Activated CD4-positive, alpha-beta T cell treated with anti-CD3 and anti-CD28 coated beads, Interleukin-2, amount 10 ng/mL, durations not matched to agents 7 days and 5 days (primary cell): ENCODE measurements at regions of chr20 and their contacts with region 1.

Region 1: DNA sequence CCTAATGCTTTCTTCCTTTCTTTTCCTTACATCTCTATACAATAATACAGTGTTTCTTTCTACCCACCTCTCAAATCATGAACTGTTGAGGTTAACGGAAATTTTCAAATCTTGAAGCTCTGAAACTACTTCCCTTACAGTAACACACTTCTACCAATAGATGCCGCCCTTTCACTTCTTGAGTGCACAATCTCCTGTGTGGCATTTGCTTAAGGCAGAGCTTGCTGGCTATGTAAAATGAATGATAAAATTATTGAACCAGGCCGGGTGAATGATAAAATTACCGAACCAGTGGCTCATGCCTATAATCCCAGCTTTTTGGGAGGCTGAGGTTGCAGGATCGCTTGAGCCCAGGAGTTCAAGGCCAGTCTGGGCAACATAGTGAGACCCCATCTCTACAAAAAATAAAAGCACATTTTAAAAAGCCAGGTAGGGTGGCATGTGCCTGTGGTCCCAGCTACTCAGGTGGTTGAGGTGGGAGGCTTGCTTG is 56.8 kb downstream of the KCNS1 start:
- DNase-seq: peak; percentile 62
- H3K4me3 Mint-ChIP-seq: no peak overlapping the region
- H3K27ac Mint-ChIP-seq: peak overlapping the region; percentile 32
- H3K4me1 Mint-ChIP-seq: peaks cover 63% of the 10 kb centered on the region
- H3K27me3 Mint-ChIP-seq: no peaks in the 10 kb centered on the region

Region 2: DNA sequence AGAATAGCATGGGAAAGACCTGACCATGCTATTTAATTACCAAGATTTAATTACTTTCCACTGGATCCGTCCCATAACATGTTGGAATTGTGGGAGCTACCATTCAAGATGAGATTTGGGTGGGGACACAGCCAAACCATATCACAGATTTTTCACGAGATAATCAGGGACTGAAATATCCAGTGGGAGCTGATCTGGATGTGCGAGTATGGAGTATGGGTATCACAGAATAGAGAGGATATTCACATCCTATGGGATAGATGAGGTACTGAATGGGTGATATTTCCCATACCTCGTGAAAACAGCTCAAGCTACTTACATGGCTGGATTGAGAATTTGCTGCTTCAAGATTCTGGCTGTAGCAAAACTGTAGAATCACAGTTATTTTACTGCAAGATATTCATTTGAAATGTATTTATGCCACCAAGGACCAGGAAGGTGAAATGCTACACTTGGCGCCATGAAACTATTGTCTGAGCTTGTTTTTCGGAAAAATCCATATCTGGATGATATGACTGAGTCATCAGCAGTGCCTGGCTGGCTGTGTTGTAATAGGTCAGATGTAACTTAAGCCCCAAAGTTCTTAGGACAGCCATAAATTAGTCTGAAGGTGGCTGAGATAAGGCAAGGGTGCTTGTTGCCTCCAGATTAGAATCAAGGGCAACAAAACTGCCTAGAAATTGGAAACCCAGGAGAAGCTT is 27.0 kb after region 1 on chr20:
- CTCF ChIA-PET with region 1: interaction called, 10 read pairs
- POLR2A ChIA-PET with region 1: no interaction called
- DNase-seq: no peak
- H3K4me3 Mint-ChIP-seq: no peak overlapping the region
- H3K27ac Mint-ChIP-seq: no peak overlapping the region
- H3K4me1 Mint-ChIP-seq: peaks cover 11% of the 10 kb centered on the region
- H3K27me3 Mint-ChIP-seq: no peaks in the 10 kb centered on the region